Activated T-helper 1 cell treated with anti-CD3 and anti-CD28 coated beads, Interleukin-12 subunit alpha, Interleukin-12 subunit beta, Interleukin-2, Interleukin-4 antibody, amounts not matched to agents 30 ng/mL and 10 ng/mL and 1 ng/mL, durations not matched to agents 14 hours and 24 hours and 36 hours (primary cell): ENCODE measurements at regions of chr2 and their contacts with region 1.

Region 1: DNA sequence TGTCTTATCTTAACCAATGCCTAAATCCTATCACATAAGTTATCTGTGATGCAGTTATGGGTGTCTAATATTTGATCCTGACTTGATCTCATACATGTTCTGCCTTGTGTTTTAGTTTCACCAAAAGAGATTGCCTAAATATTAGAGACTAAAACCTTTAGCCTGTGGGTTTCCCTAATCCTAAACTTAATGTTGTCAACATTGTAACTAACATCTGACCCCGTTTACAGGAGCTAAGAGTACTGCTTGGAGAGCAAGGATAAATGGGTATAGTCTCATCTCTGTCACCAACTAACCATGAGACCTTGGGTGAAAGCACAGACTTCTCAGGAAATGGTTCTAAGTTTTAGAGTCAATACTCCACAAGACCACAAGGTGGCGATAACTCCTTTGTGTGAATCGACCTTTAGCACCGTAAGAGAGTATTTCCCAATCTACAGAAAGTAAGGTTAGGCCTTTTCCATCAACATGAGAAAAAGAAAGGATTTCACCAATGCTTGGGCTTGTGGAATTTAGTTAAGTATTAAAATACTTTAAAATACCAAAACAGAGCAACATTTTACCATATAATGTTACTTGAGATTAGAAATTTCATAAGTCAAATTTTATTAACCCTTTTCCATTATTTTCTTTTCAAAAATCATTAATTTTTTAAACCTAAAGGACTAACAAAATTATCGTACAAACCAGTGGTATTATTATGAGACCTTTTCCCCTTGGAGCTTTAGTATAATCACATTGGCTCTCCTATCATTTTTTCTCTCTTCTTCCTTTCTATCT is 60.5 kb downstream of the G6PC2 start:
- DNase-seq: peak; percentile 30
- H3K4me3 Mint-ChIP-seq: no peak overlapping the region
- H3K27ac Mint-ChIP-seq: no peak overlapping the region
- H3K4me1 Mint-ChIP-seq: peaks cover 16% of the 10 kb centered on the region
- H3K27me3 Mint-ChIP-seq: peaks cover 8% of the 10 kb centered on the region

Region 2: GRCh38 chr2:168992591-168993349 is 31.1 kb after region 1 on chr2:
- intact Hi-C with region 1: no loop called
- DNase-seq: no peak
- H3K4me3 Mint-ChIP-seq: no peak overlapping the region
- H3K27ac Mint-ChIP-seq: no peak overlapping the region
- H3K4me1 Mint-ChIP-seq: no peaks in the 10 kb centered on the region
- H3K27me3 Mint-ChIP-seq: no peaks in the 10 kb centered on the region

Region 3: GRCh38 chr2:169072163-169072925 is 110.7 kb after region 1 on chr2:
- intact Hi-C with region 1: loop called (anchors 1 kb)
- DNase-seq: no peak
- H3K4me3 Mint-ChIP-seq: peak overlapping the region; percentile 29
- H3K27ac Mint-ChIP-seq: peak overlapping the region; percentile 54
- H3K4me1 Mint-ChIP-seq: peaks cover 44% of the 10 kb centered on the region
- H3K27me3 Mint-ChIP-seq: no peaks in the 10 kb centered on the region

Region 4: GRCh38 chr2:169131587-169132512 is 170.2 kb after region 1 on chr2:
- intact Hi-C with region 1: loop called (anchors 1 kb)
- DNase-seq: no peak
- H3K4me3 Mint-ChIP-seq: no peak overlapping the region
- H3K27ac Mint-ChIP-seq: no peak overlapping the region
- H3K4me1 Mint-ChIP-seq: no peaks in the 10 kb centered on the region
- H3K27me3 Mint-ChIP-seq: peaks cover 3% of the 10 kb centered on the region

Region 5: GRCh38 chr2:169141713-169142352 is 180.2 kb after region 1 on chr2:
- intact Hi-C with region 1: loop called (anchors 1 kb)
- DNase-seq: peak; percentile 30
- H3K4me3 Mint-ChIP-seq: no peak overlapping the region
- H3K27ac Mint-ChIP-seq: no peak overlapping the region
- H3K4me1 Mint-ChIP-seq: no peaks in the 10 kb centered on the region
- H3K27me3 Mint-ChIP-seq: peaks cover 5% of the 10 kb centered on the region